Right cardiac atrium (tissue), 5 donors: ENCODE measurements at regions of chr4 and their contacts with region 1.

Region 1: DNA sequence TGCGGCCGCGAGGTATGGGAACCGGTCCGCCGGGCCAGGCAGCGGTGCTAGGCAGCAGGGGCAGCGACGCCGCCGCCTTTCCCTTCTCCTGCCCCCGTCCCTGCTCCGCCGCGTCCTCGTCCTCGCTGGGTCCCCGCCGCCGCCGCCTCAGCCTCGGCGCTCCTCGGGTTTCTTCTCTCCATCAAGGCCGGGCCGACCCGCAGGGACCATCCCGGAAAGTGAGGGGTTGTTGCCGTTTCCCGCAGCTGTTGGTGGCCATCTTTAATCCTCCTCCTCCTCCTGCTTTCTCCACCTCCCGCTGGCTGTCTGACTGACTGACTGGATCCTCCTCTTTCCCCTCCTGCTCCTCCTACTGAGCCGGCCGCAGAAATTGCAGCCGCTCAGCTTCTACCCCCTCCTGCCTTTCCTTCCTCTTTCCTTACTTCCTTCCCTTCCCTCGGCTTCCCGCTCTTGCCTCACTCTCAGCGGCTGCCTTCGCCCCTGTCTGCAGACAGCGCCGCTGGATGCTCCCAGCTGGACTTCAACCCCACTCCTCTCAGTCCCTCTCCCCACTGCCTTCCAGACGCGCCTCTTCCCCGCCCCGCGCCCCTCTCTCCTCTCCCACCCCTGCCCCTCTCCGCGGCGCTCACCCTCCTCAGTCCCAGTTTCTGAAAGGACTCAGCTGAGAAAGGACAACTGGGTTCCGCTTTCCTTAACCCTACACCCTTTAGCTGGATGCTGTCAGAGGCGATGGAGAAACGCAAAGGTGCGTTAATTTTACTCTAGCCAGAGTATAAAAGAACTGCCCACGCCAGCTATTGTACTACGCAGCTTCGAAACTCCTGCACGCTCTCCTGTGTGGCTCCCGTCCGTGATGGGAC is at the start of gene WDFY3:
- DNase-seq: peak; percentile 84 to 91 (median 91)
- ATAC-seq: peak; percentile 97 to 98
- H3K4me3 ChIP-seq: peak within 1 kb of the TSS; percentile 78
- H3K27ac ChIP-seq: peak within 1 kb of the TSS; percentile 87
- H3K4me1 ChIP-seq: no peaks in the 10 kb centered on the region
- H3K27me3 ChIP-seq: no peaks in the 10 kb centered on the region
- total RNA-seq, gene WDFY3: 37.9 to 50.2 (median 46.7) TPM

Region 2: DNA sequence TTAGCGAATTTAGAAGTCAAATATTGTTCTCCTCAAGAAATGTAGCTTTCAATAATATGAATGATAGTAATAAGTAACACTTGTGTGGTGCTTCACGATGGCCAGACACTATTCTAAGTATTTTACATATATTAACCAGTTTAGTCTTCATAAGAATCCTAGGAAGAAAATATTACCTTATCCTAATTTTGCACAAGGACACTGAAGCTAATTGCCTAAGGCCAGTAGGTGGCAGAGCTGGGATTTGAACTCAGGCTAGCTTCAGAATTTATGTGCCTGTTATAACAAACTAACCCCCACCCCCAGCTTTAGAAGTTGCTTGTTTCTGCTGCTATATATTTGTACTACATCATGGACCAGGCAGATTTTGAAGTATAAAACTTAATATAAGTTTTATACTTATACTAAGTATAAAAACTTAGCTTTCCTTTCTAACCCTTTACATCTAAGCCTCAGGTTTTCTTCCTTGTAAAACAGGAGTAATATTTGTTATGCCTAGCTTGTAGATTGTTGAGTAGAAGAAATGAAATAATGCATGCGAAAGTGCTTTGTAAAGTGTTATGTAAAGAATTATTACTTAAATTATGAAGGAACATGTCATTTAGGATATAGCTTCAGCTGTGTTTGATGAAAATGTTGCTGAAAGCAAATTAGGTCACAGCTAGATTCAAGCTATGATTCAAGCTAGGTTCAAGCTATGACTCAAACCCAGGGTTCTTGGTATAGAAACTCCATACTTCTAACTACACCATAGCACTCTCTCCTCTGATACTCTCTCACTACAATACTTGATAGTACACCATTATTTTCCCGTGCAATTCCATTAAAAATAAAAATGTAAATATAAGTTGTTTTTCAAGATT is 387.8 kb before region 1 on chr4:
- intact Hi-C with region 1: loop called in 1 of 4 experiments (anchors 10 kb)
- DNase-seq: no peak
- ATAC-seq: no peak
- H3K4me3 ChIP-seq: no peak overlapping the region
- H3K27ac ChIP-seq: no peak overlapping the region
- H3K4me1 ChIP-seq: peaks cover 3% of the 10 kb centered on the region
- H3K27me3 ChIP-seq: no peaks in the 10 kb centered on the region

Region 3: DNA sequence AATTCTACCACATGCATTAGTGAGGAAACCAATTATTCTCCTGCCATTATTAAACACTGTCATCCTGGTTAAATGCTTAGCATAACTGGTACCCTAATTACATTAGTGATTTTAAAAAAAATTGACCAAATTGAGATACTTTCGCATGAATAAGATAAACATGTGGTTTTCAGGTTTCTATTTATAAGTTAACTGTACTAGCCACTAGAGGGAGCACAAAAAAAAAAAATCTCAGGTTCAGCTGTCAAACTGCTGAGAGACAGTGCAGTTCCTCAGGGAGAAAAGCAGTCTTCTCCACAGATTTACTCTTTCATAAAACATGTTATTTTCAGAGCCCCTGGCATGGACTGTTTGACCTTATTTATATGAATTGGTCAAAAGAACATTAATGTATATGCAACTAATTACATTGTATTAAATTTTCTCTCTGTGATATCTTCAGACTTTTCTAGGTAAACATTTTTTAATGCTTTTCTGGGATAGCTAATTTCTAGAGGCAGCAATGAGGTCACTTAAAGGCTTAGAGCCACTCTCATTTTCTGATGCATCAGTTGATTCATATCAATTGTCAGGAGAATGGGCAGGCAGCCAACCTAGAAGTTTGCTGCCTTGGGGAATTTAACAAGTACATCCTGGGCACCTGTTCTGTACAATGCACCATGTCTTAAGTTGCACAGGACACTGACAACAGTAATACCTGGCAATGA is 216.2 kb before region 1 on chr4:
- intact Hi-C with region 1: loop called in 3 of 4 experiments (anchors 2 to 5 kb)
- DNase-seq: no peak
- ATAC-seq: peak in 1 of 2 donors; percentile 59
- H3K4me3 ChIP-seq: no peak overlapping the region
- H3K27ac ChIP-seq: no peak overlapping the region
- H3K4me1 ChIP-seq: no peaks in the 10 kb centered on the region
- H3K27me3 ChIP-seq: no peaks in the 10 kb centered on the region